ENCODE measurements at regions of chr2 and their contacts with region 1.

Region 1: DNA sequence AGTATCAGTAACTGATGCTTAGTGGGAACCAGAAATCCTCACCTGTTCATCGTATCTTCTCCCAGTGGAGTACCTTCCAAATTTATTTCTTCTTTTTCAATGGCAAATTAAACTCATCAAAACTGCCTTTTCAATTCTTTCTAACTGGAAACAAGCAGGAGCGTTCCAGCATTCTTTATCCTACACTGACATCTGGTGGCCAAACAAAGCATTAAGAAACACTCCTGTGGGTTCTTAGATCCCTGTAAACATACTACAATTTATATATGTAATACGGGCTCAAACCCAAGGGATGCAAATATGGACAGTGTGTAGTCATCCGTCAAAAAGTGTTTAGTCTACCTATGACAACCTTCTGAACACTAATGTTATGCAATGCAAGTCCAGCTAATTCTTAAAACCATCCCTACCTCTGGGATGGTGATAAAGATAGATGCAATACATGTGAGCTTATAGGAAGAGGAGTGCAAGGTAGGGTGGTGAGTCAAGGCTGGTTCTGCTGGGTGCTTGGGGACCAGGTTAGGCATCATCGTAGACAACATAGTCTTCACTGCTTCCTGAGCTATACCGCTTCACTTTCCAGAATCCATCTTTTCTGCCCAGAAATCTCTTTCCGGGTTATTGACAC is 375.0 kb downstream of the CTNNA2 start:
- DNase-seq: peak in 1 of 2 experiments; percentile 71
- H3K4me3 ChIP-seq: no peak overlapping the region
- H3K4me3 Mint-ChIP-seq: no peak overlapping the region
- H3K27ac Mint-ChIP-seq: no peak overlapping the region
- H3K4me1 ChIP-seq: no peaks in the 10 kb centered on the region
- H3K4me1 Mint-ChIP-seq: no peaks in the 10 kb centered on the region
- H3K27me3 ChIP-seq: no peaks in the 10 kb centered on the region
- H3K27me3 Mint-ChIP-seq: peaks cover 14% of the 10 kb centered on the region
- CTCF ChIP-seq: peak; percentile 80 to 81

Region 2: DNA sequence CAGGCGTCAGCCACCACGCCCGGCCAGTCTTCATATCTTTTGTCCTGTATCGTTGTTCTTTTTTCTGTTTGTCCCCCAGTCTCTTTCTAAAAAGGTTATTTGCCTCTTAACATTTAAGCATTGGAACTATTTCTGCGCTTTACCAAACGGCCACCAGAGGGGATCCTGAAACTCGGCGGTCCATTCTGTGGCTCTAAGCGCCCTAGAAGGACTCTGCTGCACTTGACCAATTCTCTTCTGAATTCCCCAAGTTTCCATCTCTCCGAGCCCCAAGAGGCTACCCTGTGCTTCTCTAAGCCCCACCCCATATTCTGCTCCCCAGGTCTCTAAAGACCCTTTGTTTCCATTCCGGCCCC is 895.4 kb before region 1 on chr2:
- CTCF ChIA-PET with region 1: no interaction called
- POLR2A ChIA-PET with region 1: no interaction called
- intact Hi-C with region 1: loop called (anchors 1 kb)
- DNase-seq: peak; percentile 48 to 53
- H3K4me3 ChIP-seq: peak overlapping the region; percentile 28
- H3K4me3 Mint-ChIP-seq: peak overlapping the region; percentile 70
- H3K27ac Mint-ChIP-seq: no peak overlapping the region
- H3K4me1 ChIP-seq: no peaks in the 10 kb centered on the region; the same call in 1 of the 2 replicates
- H3K4me1 Mint-ChIP-seq: no peaks in the 10 kb centered on the region
- H3K27me3 ChIP-seq: peaks cover 1% of the 10 kb centered on the region
- H3K27me3 Mint-ChIP-seq: peaks cover 20% of the 10 kb centered on the region
- CTCF ChIP-seq: peak; percentile 62 to 67

Region 3: GRCh38 chr2:79041032-79041448 is 846.8 kb before region 1 on chr2:
- CTCF ChIA-PET with region 1: no interaction called
- POLR2A ChIA-PET with region 1: no interaction called
- intact Hi-C with region 1: loop called (anchors 1 kb)
- DNase-seq: peak in 1 of 2 experiments; percentile 18
- H3K4me3 ChIP-seq: no peak overlapping the region
- H3K4me3 Mint-ChIP-seq: no peak overlapping the region
- H3K27ac Mint-ChIP-seq: no peak overlapping the region
- H3K4me1 ChIP-seq: no peaks in the 10 kb centered on the region
- H3K4me1 Mint-ChIP-seq: no peaks in the 10 kb centered on the region
- H3K27me3 ChIP-seq: no peaks in the 10 kb centered on the region
- H3K27me3 Mint-ChIP-seq: peaks cover 6% of the 10 kb centered on the region
- CTCF ChIP-seq: peak; percentile 66 to 75

Region 4: GRCh38 chr2:79235135-79235534 is 652.7 kb before region 1 on chr2:
- CTCF ChIA-PET with region 1: no interaction called
- POLR2A ChIA-PET with region 1: no interaction called
- intact Hi-C with region 1: loop called (anchors 1 kb)
- DNase-seq: no peak
- H3K4me3 ChIP-seq: no peak overlapping the region
- H3K4me3 Mint-ChIP-seq: no peak overlapping the region
- H3K27ac Mint-ChIP-seq: no peak overlapping the region
- H3K4me1 ChIP-seq: no peaks in the 10 kb centered on the region
- H3K4me1 Mint-ChIP-seq: no peaks in the 10 kb centered on the region
- H3K27me3 ChIP-seq: no peaks in the 10 kb centered on the region
- H3K27me3 Mint-ChIP-seq: peaks cover 8% of the 10 kb centered on the region
- CTCF ChIP-seq: peak; percentile 18 to 22

Region 5: GRCh38 chr2:79740879-79741443 is 146.9 kb before region 1 on chr2:
- CTCF ChIA-PET with region 1: no interaction called
- POLR2A ChIA-PET with region 1: no interaction called
- intact Hi-C with region 1: no loop called
- DNase-seq: no peak
- H3K4me3 ChIP-seq: no peak overlapping the region
- H3K4me3 Mint-ChIP-seq: no peak overlapping the region
- H3K27ac Mint-ChIP-seq: no peak overlapping the region
- H3K4me1 ChIP-seq: no peaks in the 10 kb centered on the region
- H3K4me1 Mint-ChIP-seq: no peaks in the 10 kb centered on the region
- H3K27me3 ChIP-seq: no peaks in the 10 kb centered on the region
- H3K27me3 Mint-ChIP-seq: peaks cover 9% of the 10 kb centered on the region
- CTCF ChIP-seq: no peak

Region 6: GRCh38 chr2:79876430-79876829 is 11.4 kb before region 1 on chr2:
- CTCF ChIA-PET with region 1: no interaction called
- POLR2A ChIA-PET with region 1: no interaction called
- intact Hi-C with region 1: no loop called
- DNase-seq: peak in 1 of 2 experiments; percentile 11
- H3K4me3 ChIP-seq: no peak overlapping the region
- H3K4me3 Mint-ChIP-seq: no peak overlapping the region
- H3K27ac Mint-ChIP-seq: no peak overlapping the region
- H3K4me1 ChIP-seq: no peaks in the 10 kb centered on the region
- H3K4me1 Mint-ChIP-seq: no peaks in the 10 kb centered on the region
- H3K27me3 ChIP-seq: no peaks in the 10 kb centered on the region
- H3K27me3 Mint-ChIP-seq: peaks cover 10% of the 10 kb centered on the region
- CTCF ChIP-seq: peak; percentile 45 to 46